Tibial artery (tissue), 4 donors: ENCODE measurements at regions of chr3 and their contacts with region 1.

Region 1: DNA sequence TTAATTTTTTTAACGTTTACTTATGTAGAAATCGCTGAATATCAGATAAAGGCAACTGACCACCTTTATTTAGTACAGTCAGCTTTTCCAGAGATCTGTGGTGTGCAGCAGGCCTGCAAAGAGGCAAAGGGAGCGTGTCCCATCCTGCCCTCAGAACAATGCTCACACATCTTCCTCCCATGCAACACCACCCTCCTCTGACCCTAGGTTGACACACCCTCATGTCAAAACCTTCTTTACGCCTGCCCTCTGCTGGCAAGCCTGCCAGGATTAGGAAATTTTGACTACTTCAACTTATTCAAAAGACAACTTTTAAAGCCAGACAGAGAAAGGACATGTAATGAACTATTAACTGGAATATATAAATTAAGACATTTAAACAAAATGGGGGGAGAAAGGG is 513.7 kb downstream of the FOXP1 start:
- DNase-seq: peak; percentile 83 to 84
- H3K4me3 ChIP-seq: no peak overlapping the region
- H3K27ac ChIP-seq: peak overlapping the region; percentile 94 to 99
- H3K4me1 ChIP-seq: peaks cover 0 to 91% (median 64%) of the 10 kb centered on the region in 4 donors
- H3K27me3 ChIP-seq: no peaks in the 10 kb centered on the region
- CTCF ChIP-seq: peak; percentile 45 to 46

Region 2: GRCh38 chr3:70550723-70551319 is 519.0 kb before region 1 on chr3:
- intact Hi-C with region 1: loop called (anchors 10 kb)
- DNase-seq: peak; percentile 66 to 80
- H3K4me3 ChIP-seq: no peak overlapping the region
- H3K27ac ChIP-seq: no peak overlapping the region
- H3K4me1 ChIP-seq: no peaks in the 10 kb centered on the region
- H3K27me3 ChIP-seq: no peaks in the 10 kb centered on the region
- CTCF ChIP-seq: peak; percentile 70 to 76

Region 3: DNA sequence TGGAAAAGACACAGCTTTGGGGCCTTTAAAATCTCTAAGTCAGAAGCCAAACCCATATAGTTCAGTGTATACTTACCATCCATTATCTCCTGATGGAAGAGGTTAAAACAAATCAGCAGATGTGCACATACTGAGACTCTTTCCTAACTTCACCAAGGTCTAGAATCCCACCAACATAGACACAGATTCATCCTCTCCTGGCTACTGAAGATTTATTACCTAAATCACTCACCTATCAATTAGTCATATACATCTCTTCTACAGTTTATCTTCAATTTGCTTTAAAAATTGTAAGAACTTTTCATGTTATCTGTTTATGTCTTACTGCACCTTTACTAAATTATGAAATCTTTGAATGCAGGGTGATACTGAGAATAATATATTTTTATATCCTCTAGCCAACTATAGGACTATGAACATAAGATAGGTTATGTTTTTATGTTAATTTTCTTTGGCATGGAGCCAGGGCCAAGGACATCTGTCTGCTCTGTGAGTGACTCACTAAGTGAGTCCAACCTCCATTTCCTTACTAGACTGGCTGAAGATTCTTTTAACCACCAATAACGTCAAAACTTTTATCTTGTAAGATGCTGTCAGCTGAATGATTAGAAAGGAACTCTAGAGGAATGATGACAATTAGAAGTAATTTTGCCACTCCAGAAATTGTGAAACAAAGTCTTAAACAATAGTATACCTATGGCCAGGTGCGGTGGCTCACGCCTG is 116.1 kb after region 1 on chr3:
- intact Hi-C with region 1: no loop called
- DNase-seq: no peak
- H3K4me3 ChIP-seq: no peak overlapping the region
- H3K27ac ChIP-seq: no peak overlapping the region
- H3K4me1 ChIP-seq: peaks cover 0 to 5% (median 2%) of the 10 kb centered on the region in 4 donors
- H3K27me3 ChIP-seq: no peaks in the 10 kb centered on the region
- CTCF ChIP-seq: no peak

Region 4: DNA sequence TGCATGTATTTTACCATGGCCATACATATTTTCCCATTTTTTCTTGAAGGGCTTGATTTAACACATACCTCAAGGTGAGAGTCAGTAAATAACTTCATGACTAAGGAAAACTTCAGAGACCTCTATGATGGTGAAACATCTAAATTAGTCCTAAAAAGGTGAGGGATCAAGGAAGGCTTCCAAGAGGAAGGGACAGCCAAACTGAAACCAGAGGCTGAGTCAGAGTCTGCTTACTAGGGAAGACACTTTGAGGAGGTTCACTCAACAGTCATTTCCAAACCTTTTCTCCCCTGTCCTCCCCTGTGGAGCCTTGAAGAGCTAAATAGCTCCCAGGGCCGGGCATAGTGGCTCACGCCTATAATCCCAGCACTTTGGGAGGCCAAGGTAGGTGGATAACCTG is 1571.9 kb after region 1 on chr3:
- intact Hi-C with region 1: no loop called
- DNase-seq: no peak
- H3K4me3 ChIP-seq: no peak overlapping the region
- H3K27ac ChIP-seq: no peak overlapping the region
- H3K4me1 ChIP-seq: no peaks in the 10 kb centered on the region
- H3K27me3 ChIP-seq: peaks cover 0 to 29% of the 10 kb centered on the region in 2 donors
- CTCF ChIP-seq: no peak